ENCODE measurements at regions of chr4 and their contacts with region 1.

Region 1: DNA sequence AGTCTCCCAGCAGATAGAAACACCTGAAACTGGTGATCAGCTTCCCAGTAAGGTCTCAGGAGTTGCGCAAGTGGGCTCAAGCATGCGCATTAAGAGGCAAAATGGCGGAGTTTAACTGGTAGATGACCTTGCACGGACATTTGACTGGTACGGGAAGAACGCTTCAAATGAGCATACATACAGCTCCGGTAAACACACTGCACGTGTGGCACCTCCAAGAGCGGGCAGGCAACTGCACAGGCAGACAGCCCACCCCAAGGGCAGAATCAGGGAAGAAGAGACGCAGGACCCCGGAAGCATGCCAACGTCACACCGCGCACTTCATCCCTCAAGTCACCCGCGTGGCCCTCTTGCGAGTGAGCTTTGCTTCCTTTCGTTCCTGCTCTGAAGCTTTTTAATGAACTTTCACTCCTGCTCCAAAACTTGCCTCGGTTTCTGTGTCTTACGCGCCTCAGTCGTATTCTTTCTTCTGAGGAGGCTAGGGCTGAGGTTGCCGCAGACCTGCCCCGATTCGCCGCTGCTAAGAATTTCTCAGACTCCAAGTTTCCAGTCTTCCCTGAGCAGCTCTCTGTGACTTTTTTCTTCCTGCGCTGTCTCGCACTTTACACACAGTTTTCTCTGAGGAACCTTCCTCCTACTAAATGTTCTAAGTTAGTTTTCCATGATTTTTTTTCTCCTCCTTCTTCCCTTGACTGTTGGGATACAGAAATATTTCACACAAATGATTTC is 180.7 kb upstream of the ZFP42 start:
- DNase-seq: no peak

Region 2: GRCh38 chr4:187849556-187850225 is 34.8 kb after region 1 on chr4:
- intact Hi-C with region 1: no loop called
- DNase-seq: no peak

Region 3: GRCh38 chr4:188078116-188078515 is 263.2 kb after region 1 on chr4:
- intact Hi-C with region 1: loop called in 1 of 2 experiments (anchors 5 kb)
- DNase-seq: no peak